Activated naive CD4-positive, alpha-beta T cell treated with anti-CD3 and anti-CD28 coated beads for 36 hours (primary cell): ENCODE measurements at regions of chr10 and their contacts with region 1.

Region 1: GRCh38 chr10:27504007-27504807 is at the start of gene RAB18:
- DNase-seq: peak; percentile 99
- H3K4me3 Mint-ChIP-seq: peak within 1 kb of the TSS; percentile 99
- H3K27ac Mint-ChIP-seq: peak within 1 kb of the TSS; percentile 92
- H3K4me1 Mint-ChIP-seq: peaks cover 41% of the 10 kb centered on the region
- H3K27me3 Mint-ChIP-seq: no peaks in the 10 kb centered on the region
- total RNA-seq, gene RAB18: 35.4 to 41.3 TPM

Region 2: GRCh38 chr10:26437637-26438461 is 1066.4 kb before region 1 on chr10 and contains the start of gene APBB1IP:
- CTCF ChIA-PET with region 1: no interaction called
- intact Hi-C with region 1: loop called (anchors 10 kb)
- DNase-seq: peak; percentile 58
- H3K4me3 Mint-ChIP-seq: peak within 1 kb of the TSS; percentile 81
- H3K27ac Mint-ChIP-seq: peak within 1 kb of the TSS; percentile 98
- H3K4me1 Mint-ChIP-seq: peaks cover 50% of the 10 kb centered on the region
- H3K27me3 Mint-ChIP-seq: no peaks in the 10 kb centered on the region
- total RNA-seq, gene APBB1IP: 29.4 to 30.9 TPM

Region 3: DNA sequence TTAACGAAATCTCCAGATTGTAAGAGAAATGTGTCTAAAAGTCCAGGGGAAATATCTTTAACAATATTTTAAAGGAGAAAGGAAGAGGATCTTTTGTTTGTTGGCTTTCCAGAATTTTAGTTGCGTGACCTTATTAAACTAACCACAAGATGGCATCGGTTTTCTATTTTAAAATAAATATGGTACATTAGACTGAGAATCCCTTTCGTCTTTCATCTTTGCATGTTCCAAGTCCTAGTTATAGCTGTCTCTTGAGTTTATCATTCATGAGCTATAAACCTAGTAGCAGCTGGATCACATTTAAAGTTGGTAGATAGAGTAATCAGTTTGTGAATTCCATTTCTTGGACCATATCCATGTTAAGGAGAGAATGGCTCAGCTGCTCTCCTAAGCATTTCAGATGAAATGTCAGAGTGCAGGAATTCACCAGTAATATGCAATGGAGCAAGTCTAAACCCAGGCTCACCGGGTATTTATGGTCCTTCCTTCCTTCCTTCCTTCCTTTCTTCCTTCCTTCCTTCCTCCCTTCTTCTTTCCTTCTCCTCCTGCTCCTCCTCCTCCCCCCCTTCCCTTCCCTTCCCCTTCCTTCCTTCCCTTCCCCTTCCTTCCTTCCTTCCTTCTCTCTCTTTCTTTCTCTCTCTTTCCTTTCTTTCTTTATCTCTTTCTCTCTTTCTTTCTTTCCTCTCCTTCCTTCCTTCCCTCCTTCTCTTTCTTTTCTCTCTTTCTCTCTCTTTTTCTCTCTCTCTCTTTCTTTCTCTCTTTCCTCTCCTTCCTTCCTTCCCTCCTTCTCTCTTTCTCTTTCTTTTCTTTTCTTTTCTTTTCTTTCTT is 57.9 kb before region 1 on chr10:
- CTCF ChIA-PET with region 1: no interaction called
- intact Hi-C with region 1: loop called (anchors 2 kb)
- DNase-seq: no peak
- H3K4me3 Mint-ChIP-seq: no peak overlapping the region
- H3K27ac Mint-ChIP-seq: no peak overlapping the region
- H3K4me1 Mint-ChIP-seq: peaks cover 7% of the 10 kb centered on the region
- H3K27me3 Mint-ChIP-seq: no peaks in the 10 kb centered on the region

Region 4: GRCh38 chr10:27661514-27662286 is 157.5 kb after region 1 on chr10:
- CTCF ChIA-PET with region 1: no interaction called
- intact Hi-C with region 1: loop called (anchors 2 kb)
- DNase-seq: no peak
- H3K4me3 Mint-ChIP-seq: no peak overlapping the region
- H3K27ac Mint-ChIP-seq: no peak overlapping the region
- H3K4me1 Mint-ChIP-seq: no peaks in the 10 kb centered on the region
- H3K27me3 Mint-ChIP-seq: peaks cover 18% of the 10 kb centered on the region

Region 5: DNA sequence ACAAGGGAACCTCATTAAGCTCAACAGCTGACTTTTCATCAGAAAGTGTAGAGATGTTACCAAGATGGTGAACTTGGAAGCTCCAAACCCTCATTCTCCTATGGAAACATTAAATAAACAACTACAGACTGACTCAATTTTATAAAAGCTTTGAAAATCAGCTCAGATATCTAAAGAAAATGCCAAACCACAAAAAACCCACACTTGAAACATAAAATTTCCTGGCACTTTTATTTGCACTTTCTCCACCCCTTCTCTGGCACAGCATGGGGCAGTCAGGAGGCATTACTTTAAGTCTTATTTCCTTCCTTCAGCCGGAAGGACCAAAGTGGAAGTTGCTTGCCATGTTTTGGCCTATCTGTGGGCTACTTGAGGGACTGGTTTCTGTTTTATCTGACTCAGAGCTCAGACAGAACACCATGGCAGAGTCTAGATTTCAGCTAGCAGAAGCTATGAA is 380.0 kb after region 1 on chr10:
- CTCF ChIA-PET with region 1: no interaction called
- intact Hi-C with region 1: no loop called
- DNase-seq: no peak
- H3K4me3 Mint-ChIP-seq: no peak overlapping the region
- H3K27ac Mint-ChIP-seq: peak overlapping the region; percentile 43
- H3K4me1 Mint-ChIP-seq: peaks cover 9% of the 10 kb centered on the region
- H3K27me3 Mint-ChIP-seq: no peaks in the 10 kb centered on the region

Region 6: DNA sequence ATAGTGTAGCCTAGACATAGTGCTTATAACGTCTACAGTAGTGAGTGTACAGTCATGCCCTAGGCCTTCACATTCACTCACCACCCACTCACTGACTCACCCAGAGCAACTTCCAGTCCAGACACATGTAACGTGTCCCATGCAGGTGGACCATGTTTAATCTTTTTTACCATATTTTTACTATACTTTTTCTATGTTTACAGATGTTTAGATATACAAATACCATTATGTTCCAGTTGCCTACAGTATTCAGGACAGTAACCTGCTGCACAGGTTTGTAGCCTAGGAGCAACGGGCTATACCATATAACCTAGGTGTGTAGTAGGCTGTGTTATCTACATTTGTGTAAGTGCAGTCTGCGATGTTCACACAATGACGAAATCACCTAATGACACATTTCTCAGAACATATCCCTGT is 787.7 kb after region 1 on chr10:
- CTCF ChIA-PET with region 1: no interaction called
- intact Hi-C with region 1: loop called (anchors 5 kb)
- DNase-seq: peak; percentile 84
- H3K4me3 Mint-ChIP-seq: no peak overlapping the region
- H3K27ac Mint-ChIP-seq: peak overlapping the region; percentile 89
- H3K4me1 Mint-ChIP-seq: peaks cover 73% of the 10 kb centered on the region
- H3K27me3 Mint-ChIP-seq: no peaks in the 10 kb centered on the region